ENCODE measurements at regions of chr2 and their contacts with region 1.

Region 1: GRCh38 chr2:217988014-217988839 is 14.6 kb downstream of the TNS1 start:
- DNase-seq: peak; percentile 92 to 94
- H3K4me3 ChIP-seq: peak overlapping the region in 1 of 3 donors; percentile 49
- H3K27ac ChIP-seq: peak overlapping the region; percentile 85 to 90
- H3K4me1 ChIP-seq: peaks cover 5 to 14% of the 10 kb centered on the region in 2 donors
- H3K27me3 ChIP-seq: no peaks in the 10 kb centered on the region
- CTCF ChIP-seq: peak; percentile 86 to 94 (median 88)
- POLR2A ChIP-seq: no peak

Region 2: GRCh38 chr2:217886720-217887309 is 101.4 kb before region 1 on chr2:
- intact Hi-C with region 1: loop called (anchors 10 kb)
- DNase-seq: peak in 1 of 2 donors; percentile 77
- H3K4me3 ChIP-seq: no peak overlapping the region
- H3K27ac ChIP-seq: peak overlapping the region in 1 of 2 donors; percentile 71
- H3K4me1 ChIP-seq: no peaks in the 10 kb centered on the region
- H3K27me3 ChIP-seq: no peaks in the 10 kb centered on the region
- CTCF ChIP-seq: peak; percentile 67 to 81 (median 79)
- POLR2A ChIP-seq: no peak

Region 3: DNA sequence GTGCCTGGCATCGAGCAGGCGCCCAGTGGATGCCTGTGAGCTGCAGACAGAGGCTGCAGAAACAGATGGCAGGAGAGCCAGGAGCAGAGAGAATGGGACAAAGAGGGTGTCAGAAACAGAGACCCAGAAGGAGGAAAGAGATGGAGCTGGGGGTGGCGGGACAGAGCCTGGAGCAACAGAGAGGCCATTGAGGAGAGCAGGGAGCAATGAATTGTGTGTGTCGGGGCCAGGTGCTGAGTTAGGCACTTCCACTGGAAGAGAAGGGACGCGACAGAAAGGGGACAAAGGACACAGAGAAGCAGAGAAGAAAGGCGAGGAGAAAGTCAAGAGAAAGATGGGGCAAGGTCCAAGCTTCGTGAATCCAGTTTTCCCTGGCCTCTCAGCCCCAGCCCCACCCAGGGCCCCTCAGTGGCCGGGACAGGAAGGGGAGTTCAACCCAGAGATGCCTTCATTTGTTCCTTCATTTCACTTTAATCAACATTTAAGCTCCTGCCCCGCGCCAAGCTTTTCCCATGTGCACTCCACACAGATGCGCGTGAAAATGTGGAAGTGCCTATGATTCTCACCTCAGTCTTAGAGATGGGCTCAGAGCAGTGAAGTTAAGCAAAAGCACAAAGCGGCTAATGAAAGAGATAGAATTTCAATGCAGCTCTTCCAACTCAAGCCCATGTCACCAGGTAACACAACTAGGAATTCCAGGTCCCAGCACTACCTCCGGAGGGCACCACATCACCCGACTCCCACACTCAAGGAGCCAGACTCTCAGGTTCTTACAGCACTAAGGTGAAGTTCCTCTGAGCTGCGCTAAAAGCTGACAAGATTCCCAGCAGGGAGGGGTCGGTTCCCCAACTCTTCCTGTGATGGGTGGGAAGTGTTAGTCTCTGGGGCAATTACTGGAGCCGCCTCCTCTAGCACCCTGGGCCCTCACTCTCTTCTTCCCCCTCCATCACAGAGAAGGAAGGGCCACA is 40.6 kb before region 1 on chr2:
- intact Hi-C with region 1: loop called (anchors 5 kb)
- DNase-seq: peak in 1 of 2 donors; percentile 39
- H3K4me3 ChIP-seq: no peak overlapping the region
- H3K27ac ChIP-seq: peak overlapping the region; percentile 10 to 51
- H3K4me1 ChIP-seq: peaks cover 4 to 43% of the 10 kb centered on the region in 2 donors
- H3K27me3 ChIP-seq: no peaks in the 10 kb centered on the region
- CTCF ChIP-seq: no peak
- POLR2A ChIP-seq: no peak

Region 4: DNA sequence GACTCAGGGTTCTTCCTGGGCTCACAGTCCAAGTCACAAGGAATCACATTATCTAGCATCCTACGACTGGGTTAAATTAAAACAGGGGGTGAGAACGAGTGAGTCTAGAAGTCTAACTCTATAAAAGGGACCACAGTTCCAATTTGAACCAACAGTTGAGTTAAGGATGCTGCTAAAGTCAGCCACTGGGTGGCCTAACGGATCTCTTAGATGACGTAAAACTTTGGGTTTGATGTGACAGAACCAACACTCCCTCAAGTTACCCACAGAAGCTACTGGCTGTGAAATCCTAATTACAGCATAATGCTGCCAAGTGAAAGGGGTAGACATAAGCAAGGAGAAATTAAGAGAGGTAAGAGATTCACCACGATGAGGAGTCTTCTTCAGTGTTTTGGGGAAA is 48.1 kb after region 1 on chr2:
- intact Hi-C with region 1: loop called (anchors 1 kb)
- DNase-seq: no peak
- H3K4me3 ChIP-seq: no peak overlapping the region
- H3K27ac ChIP-seq: no peak overlapping the region
- H3K4me1 ChIP-seq: peaks cover 0 to 11% of the 10 kb centered on the region in 2 donors
- H3K27me3 ChIP-seq: no peaks in the 10 kb centered on the region
- CTCF ChIP-seq: no peak
- POLR2A ChIP-seq: no peak

Measured in breast epithelium (tissue), 4 donors.